Activated naive CD4-positive, alpha-beta T cell treated with anti-CD3 and anti-CD28 coated beads, Interleukin-2, amount 10 ng/mL, durations not matched to agents 7 days and 5 days (primary cell): ENCODE measurements at regions of chr2 and their contacts with region 1.

Region 1: DNA sequence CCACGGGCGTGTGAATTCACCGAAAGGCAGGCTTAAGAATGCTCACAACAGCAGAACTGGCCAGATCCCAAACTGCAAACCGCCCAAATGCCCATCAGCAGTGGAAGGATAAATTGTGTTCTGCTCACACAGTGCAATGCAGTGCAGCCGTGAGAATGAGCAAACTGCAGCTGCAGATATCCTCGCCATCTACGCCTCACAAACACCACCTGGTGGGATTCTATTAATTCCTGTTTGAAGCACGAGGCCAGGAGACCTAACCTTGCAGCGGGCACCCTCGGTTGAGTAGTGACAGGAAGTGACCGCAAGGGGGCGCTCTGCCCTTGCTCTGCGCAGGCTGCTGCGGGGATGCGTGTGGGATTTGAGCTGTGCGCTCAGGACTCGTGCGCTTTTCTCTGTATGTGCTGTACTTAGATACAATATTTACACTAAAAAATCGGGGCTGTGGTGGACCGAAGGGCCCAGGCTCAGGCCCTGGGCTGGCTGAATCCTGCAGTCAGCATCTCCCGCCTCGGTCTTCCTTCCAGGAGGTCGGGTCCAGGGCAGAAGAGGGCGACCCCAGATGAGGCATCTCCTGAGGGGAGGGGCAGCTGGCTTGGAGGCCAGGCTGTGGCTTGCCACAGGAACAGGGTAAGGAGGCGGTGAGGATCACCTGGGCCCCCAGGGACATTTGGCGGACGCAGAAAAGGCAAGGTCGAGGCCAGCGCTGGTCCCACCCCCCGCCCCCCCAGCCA is 19.8 kb upstream of the PDIA6 start:
- DNase-seq: peak; percentile 87
- H3K4me3 Mint-ChIP-seq: no peak overlapping the region
- H3K27ac Mint-ChIP-seq: no peak overlapping the region
- H3K4me1 Mint-ChIP-seq: peaks cover 4% of the 10 kb centered on the region
- H3K27me3 Mint-ChIP-seq: peaks cover 64% of the 10 kb centered on the region

Region 2: DNA sequence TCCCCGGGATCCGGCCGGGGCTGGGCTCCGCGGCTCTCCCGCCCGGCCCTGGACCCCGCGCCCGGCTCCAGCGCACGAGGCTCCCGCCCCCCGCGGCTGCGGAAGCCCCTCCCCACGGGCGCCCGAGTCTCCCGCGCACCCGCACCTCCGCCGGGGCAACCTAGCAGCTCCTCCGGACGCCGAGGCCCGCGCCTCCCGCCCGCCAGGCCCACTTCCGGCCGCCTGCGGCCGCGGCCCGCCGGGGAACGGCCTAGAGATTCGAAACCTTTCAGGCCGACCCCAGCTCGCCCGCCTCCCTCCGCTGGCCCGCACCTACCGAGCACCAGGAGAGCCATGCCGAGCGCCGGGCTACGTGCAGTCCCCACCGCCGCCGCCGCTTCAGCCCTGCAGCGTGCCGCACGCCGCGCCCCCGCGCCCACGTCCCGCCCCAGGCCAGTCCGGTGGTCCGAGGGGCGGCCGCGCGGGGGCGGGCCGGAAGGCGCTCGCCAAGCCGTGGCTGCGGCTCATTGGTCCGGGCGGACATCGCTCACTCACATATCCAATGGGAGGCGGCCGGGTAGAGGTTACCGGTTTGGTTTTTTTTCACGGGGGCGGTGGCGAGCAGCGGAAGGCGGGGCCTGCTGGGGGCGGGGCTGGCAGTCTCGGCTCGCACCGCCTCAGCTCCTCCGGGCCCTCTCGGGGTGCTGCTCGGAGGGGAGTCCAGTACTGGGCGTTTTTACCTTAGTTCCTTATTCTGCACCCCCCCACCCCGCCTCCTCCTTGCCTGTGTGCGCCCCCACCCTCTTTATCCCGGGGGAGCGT is 19.8 kb before region 1 on chr2 and contains the start of gene PDIA6:
- CTCF ChIA-PET with region 1: interaction called, 11 read pairs
- DNase-seq: peak; percentile 95
- H3K4me3 Mint-ChIP-seq: peak within 1 kb of the TSS; percentile 92
- H3K27ac Mint-ChIP-seq: peak within 1 kb of the TSS; percentile 93
- H3K4me1 Mint-ChIP-seq: peaks cover 37% of the 10 kb centered on the region
- H3K27me3 Mint-ChIP-seq: peaks cover 39% of the 10 kb centered on the region

Region 3: GRCh38 chr2:11124503-11125068 is 292.2 kb after region 1 on chr2:
- CTCF ChIA-PET with region 1: interaction called, 137 read pairs
- DNase-seq: peak; percentile 80
- H3K4me3 Mint-ChIP-seq: no peak overlapping the region
- H3K27ac Mint-ChIP-seq: no peak overlapping the region
- H3K4me1 Mint-ChIP-seq: peaks cover 18% of the 10 kb centered on the region
- H3K27me3 Mint-ChIP-seq: peaks cover 44% of the 10 kb centered on the region